ENCODE measurements at regions of chr5 and their contacts with region 1.

Region 1: DNA sequence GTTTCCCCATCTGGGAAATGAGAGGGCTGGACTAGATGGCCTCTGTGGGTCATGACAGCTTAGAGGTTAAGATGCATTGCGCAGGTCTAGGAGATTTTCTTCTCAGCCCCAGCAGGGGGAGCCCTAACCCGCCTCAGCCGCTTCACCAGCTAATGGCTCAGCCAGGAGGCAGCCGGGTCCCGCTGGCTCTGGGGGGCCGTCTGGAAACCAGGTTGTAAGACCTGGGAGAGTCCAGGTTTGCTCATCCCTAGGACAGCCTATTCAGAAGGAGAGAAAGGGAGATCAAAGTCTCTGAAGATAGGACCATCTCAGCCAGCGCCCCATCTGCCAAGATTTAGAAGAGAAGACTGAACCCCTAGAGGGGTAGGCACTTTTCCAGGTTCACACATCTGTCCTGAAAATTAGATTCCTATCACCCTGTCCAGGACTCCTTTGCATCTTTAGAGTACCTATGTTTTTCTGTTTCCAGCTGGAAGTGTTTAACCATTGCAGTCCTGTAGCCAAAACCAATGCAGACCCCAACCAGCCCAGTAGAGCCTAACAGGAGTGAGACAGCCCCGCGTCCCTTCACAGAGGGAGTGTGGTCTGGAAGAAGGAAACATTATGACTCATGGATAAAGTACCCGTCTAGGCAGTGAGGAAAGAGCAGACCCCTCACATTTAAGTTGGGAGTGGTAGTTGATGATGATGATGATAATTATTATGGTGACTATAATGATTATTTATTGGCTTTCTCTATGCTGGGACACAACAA is 27.5 kb downstream of the SPARC start:
- DNase-seq: no peak
- H3K4me3 ChIP-seq: no peak overlapping the region
- H3K27me3 ChIP-seq: no peaks in the 10 kb centered on the region
- CTCF ChIP-seq: peak; percentile 85

Region 2: DNA sequence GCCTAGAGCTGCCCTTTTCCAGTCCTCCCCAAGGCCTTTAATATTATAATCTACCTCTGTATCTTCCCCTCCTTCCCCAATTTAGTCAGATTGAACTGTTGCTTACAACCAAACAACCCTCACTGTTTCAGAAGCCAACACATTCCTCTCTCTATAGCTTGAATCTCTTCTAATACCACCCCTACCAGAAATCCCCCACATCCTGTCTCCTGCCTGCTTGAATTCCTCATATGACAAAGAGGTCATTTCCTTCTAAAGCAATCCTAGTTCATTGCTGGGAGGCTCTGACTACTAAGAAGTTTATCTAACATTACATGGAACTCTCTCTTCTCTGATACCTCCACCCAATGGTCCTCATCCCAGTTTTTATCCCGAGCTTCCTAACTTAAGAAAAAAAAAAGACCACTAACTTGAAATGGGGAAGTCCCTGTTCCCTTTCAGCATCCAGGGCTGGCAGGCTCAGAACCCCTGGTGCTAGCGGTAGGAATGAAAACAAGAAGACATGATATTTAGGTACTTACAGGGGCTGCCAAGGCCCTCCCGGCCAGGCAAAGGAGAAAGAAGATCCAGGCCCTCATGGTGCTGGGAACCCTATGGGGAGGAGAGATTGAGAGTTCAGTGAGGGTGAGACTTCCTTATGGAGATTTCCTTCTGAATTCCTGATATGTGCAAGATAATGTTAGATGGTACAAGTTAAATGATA is 16.6 kb after region 1 on chr5:
- CTCF ChIA-PET with region 1: interaction called, 17 read pairs
- POLR2A ChIA-PET with region 1: interaction called, 7 read pairs
- DNase-seq: no peak
- H3K4me3 ChIP-seq: no peak overlapping the region
- H3K27me3 ChIP-seq: no peaks in the 10 kb centered on the region
- CTCF ChIP-seq: no peak

Region 3: GRCh38 chr5:151771259-151772028 is 112.3 kb after region 1 on chr5 and contains the start of gene G3BP1:
- CTCF ChIA-PET with region 1: interaction called, 10 read pairs
- POLR2A ChIA-PET with region 1: interaction called, 3 read pairs
- DNase-seq: peak; percentile 100
- H3K4me3 ChIP-seq: peak within 1 kb of the TSS; percentile 71
- H3K27me3 ChIP-seq: no peaks in the 10 kb centered on the region
- CTCF ChIP-seq: peak; percentile 65
- polyA plus RNA-seq, gene G3BP1: 59.1 and 100 TPM in 2 replicates

Region 4: DNA sequence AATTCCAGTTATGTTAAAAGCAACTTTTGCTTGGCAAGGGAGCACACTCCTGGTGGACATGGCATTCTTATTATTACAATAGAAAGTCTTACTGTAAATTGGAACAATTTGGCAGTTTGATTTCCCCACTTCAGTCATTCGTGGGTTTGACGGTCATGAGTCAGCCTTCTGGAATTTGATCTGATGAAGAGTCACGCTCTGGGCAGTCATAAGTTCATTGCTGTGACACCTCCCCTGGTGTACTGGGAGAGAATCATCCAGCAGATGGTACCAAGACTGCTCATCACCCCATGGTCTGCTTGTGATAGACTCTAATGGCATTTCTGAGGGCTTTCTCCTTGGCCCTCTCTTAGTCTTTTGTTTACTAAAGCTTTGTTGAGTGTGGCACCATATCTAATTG is 211.6 kb after region 1 on chr5:
- CTCF ChIA-PET with region 1: no interaction called
- POLR2A ChIA-PET with region 1: no interaction called
- DNase-seq: peak; percentile 9
- H3K4me3 ChIP-seq: no peak overlapping the region
- H3K27me3 ChIP-seq: no peaks in the 10 kb centered on the region
- CTCF ChIP-seq: no peak

Measured in BJ (cell line).